HCT116 (cell line): ENCODE measurements at regions of chr16 and their contacts with region 1.

Region 1: GRCh38 chr16:15888072-15888976 is at the start of gene CEP20:
- DNase-seq: peak; percentile 97
- ATAC-seq: peak; percentile 99
- H3K4me3 ChIP-seq: peak within 1 kb of the TSS; percentile 88 to 99
- H3K27ac ChIP-seq: peak within 1 kb of the TSS; percentile 74
- H3K4me1 ChIP-seq: peaks cover 9 to 21% of the 10 kb centered on the region in 2 experiments; a peak in 3 of 4 replicates
- H3K27me3 ChIP-seq: no peaks in the 10 kb centered on the region
- CTCF ChIP-seq: no peak; a peak in 1 of 6 replicates
- POLR2A ChIP-seq: no peak
- RAD21 ChIP-seq: no peak
- total RNA-seq, gene CEP20: 67.7 TPM

Region 2: DNA sequence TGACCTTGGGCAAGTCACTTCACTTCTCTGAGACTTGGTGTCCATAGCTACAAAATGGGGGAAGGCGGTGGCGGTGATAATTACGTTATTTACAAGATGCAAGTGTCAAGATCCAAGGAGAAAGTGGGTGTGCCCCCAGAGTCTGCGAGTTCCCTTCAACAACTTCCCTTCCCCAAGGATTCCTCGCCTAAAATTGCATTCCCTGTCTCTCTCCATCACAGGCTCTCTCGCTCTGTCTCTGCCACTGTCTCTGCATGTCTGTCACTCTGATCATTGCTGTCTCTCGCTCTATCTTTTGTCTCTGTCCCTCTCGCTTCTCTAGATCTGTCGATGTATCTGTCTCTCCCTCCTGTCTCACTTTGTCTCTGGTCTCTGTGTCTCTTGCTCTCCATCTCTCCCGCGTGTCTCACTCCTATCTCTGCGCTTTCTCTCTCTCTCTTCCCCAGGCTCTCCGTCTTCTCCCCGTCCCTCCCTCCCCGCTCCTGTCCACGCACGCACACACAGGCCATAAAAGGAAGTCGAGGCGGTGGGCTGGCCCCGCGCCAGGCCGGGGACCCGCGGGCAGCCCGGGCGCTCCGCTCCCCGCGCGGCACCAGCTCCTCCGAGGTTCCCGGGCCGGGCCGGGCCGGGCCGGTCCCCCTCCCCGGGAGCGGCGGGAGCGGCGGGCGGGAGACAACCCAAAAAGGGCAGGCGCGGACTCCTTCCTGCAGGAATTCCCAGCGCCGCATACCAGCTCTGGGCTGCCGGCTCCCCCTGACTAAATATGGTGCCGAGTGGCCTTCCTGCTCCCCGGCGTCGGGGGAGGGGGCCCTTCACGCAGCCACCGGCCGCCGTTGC is 30.4 kb before region 1 on chr16:
- CTCF ChIA-PET with region 1: no interaction called
- POLR2A ChIA-PET with region 1: no interaction called
- RAD21 ChIA-PET with region 1: no interaction called
- intact Hi-C with region 1: no loop called
- DNase-seq: no peak
- ATAC-seq: no peak
- H3K4me3 ChIP-seq: no peak overlapping the region
- H3K27ac ChIP-seq: no peak overlapping the region
- H3K4me1 ChIP-seq: no peaks in the 10 kb centered on the region
- H3K27me3 ChIP-seq: no peaks in the 10 kb centered on the region
- CTCF ChIP-seq: no peak
- POLR2A ChIP-seq: no peak
- RAD21 ChIP-seq: no peak

Region 3: GRCh38 chr16:15874745-15875314 is 13.5 kb before region 1 on chr16:
- CTCF ChIA-PET with region 1: interaction called, 19 read pairs
- POLR2A ChIA-PET with region 1: interaction called, 15 read pairs
- RAD21 ChIA-PET with region 1: interaction called in 1 of 2 experiments, 3 read pairs
- intact Hi-C with region 1: no loop called
- DNase-seq: peak; percentile 61
- ATAC-seq: peak; percentile 94
- H3K4me3 ChIP-seq: no peak overlapping the region
- H3K27ac ChIP-seq: no peak overlapping the region; the same call in 1 of the 2 replicates
- H3K4me1 ChIP-seq: peaks cover 5 to 8% of the 10 kb centered on the region in 2 experiments; a peak in 3 of 4 replicates
- H3K27me3 ChIP-seq: no peaks in the 10 kb centered on the region
- CTCF ChIP-seq: peak; percentile 48 to 89 (median 82); a peak in 5 of 6 replicates
- POLR2A ChIP-seq: no peak
- RAD21 ChIP-seq: peak; percentile 82

Region 4: DNA sequence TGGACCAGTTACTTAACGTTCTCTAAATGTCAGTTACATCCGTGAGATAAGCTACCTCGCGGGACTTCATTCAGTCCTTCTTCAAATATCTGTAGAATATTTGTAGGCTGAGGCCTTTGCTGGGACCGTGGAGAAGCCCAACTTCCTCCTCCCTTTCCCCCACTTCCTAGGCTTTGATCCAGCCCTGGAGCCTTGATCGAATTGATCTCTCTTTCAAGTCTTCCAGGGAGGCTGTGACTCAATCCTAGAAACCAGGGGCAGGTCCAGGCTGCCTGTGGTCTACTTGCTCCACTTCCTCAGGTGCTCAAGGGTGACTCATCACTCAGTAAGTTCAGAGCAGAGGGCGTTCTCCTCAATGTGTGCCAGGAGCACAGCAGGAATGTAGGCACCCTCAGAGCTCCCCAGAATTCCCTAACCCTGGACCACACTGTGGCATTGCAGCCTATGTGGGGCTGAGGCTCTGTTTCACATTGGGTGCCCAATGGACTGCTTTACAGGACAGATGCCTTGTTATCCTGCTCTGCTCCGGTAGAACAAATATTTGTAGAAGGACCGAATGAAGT is 11.3 kb after region 1 on chr16:
- CTCF ChIA-PET with region 1: interaction called, 3 read pairs
- POLR2A ChIA-PET with region 1: interaction called, 18 read pairs
- RAD21 ChIA-PET with region 1: interaction called in 1 of 2 experiments, 4 read pairs
- intact Hi-C with region 1: no loop called
- DNase-seq: peak; percentile 99
- ATAC-seq: peak; percentile 93
- H3K4me3 ChIP-seq: peak overlapping the region; percentile 11 to 38
- H3K27ac ChIP-seq: peak overlapping the region; percentile 87
- H3K4me1 ChIP-seq: peaks cover 46 to 73% of the 10 kb centered on the region in 2 experiments
- H3K27me3 ChIP-seq: no peaks in the 10 kb centered on the region
- CTCF ChIP-seq: no peak
- POLR2A ChIP-seq: no peak
- RAD21 ChIP-seq: peak; percentile 51

Region 5: GRCh38 chr16:16021988-16022682 is 133.8 kb after region 1 on chr16:
- CTCF ChIA-PET with region 1: no interaction called
- POLR2A ChIA-PET with region 1: interaction called, 3 read pairs
- RAD21 ChIA-PET with region 1: no interaction called
- intact Hi-C with region 1: loop called (anchors 5 kb)
- DNase-seq: peak; percentile 81
- ATAC-seq: peak; percentile 95
- H3K4me3 ChIP-seq: peak overlapping the region in 1 of 2 experiments; percentile 19; a peak in 3 of 4 replicates
- H3K27ac ChIP-seq: peak overlapping the region; percentile 75
- H3K4me1 ChIP-seq: peaks cover 48 to 80% of the 10 kb centered on the region in 2 experiments
- H3K27me3 ChIP-seq: no peaks in the 10 kb centered on the region
- CTCF ChIP-seq: no peak
- POLR2A ChIP-seq: no peak
- RAD21 ChIP-seq: 0 out of 2 replicates have a peak, but pooled peaks have one; percentile 49